Heart right ventricle (tissue), 16 donors: ENCODE measurements at regions of chr1 and their contacts with region 1.

Region 1: DNA sequence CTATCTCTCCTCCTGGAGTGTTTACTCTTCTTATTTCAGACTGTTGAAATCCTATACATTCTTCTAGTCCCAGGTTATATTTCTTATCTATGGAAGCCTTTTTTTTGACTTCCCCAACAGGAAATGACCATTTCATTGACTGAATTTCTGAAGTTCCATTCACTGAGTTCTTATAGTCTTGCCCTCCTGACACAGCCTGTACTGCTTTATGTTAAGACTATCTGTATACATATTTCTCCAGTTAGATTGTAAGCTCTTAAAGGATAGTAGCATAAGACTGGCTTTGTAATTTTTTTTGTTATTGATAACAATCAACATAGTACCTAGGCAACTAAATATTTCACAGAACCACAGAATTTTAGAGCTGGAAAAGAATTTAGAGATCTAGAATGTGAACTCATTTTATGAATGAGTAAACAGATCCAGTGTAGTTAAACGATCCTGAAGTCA is 14.9 kb upstream of the MACF1 start:
- DNase-seq: no peak
- ATAC-seq: no peak
- H3K4me3 ChIP-seq: no peak overlapping the region
- H3K27ac ChIP-seq: no peak overlapping the region
- H3K4me1 ChIP-seq: peaks cover 3 to 67% (median 37%) of the 10 kb centered on the region in 9 donors
- H3K27me3 ChIP-seq: no peaks in the 10 kb centered on the region
- CTCF ChIP-seq: no peak

Region 2: GRCh38 chr1:38708701-38709258 is 480.8 kb before region 1 on chr1:
- intact Hi-C with region 1: no loop called
- DNase-seq: no peak
- ATAC-seq: no peak
- H3K4me3 ChIP-seq: no peak overlapping the region
- H3K27ac ChIP-seq: no peak overlapping the region
- H3K4me1 ChIP-seq: no peaks in the 10 kb centered on the region
- H3K27me3 ChIP-seq: peaks cover 0 to 26% (median 0%) of the 10 kb centered on the region in 7 donors
- CTCF ChIP-seq: no peak

Region 3: DNA sequence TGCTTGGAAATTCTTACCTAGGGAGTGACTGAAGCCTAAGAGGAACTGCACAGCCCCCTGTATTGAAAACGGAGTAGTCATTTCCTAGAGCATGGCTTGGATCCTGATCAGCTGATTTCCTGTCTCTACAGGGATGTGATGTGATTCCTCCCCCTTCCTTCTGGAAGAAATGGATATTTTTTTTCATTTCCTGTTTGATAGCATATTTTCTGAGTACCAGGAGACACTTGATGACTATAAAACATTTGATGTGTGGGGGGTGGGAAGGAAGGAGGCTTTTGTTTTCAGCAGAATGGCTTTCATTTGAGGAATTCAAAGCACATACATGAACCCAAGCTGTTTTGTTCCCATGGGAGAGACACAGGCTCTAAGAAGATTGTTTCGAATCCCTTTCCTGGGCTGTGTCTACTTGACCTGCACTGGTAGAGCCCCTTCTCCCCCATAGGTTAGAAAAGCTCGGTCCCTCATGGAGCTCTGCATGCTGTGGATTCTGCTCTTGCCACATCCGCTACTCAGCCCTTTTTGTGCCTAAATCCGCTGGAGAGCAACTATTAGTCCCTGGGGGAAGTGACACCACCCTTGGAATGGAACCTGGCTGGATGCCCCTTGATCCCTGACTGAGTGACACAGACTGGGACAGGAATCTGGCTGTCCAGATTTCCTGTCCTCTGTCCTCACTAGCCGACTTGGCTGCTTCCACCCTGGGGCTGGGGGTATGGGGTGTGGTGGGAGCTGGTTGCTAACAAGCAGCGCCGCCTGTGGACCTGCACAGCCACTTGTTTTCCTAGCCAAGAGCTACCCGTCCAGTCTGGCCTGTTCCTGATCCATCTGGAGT is 56.9 kb before region 1 on chr1:
- intact Hi-C with region 1: loop called in 3 of 10 experiments (anchors 5 to 10 kb)
- DNase-seq: peak; percentile 74 to 88
- ATAC-seq: peak; percentile 76 to 95 (median 91)
- H3K4me3 ChIP-seq: peak overlapping the region in 2 of 10 donors; percentile 6 to 9
- H3K27ac ChIP-seq: peak overlapping the region in 9 of 10 donors; percentile 69 to 84 (median 75)
- H3K4me1 ChIP-seq: peaks cover 5 to 76% (median 61%) of the 10 kb centered on the region in 9 donors
- H3K27me3 ChIP-seq: no peaks in the 10 kb centered on the region
- CTCF ChIP-seq: peak in 8 of 9 donors; percentile 26 to 69 (median 48)

Region 4: DNA sequence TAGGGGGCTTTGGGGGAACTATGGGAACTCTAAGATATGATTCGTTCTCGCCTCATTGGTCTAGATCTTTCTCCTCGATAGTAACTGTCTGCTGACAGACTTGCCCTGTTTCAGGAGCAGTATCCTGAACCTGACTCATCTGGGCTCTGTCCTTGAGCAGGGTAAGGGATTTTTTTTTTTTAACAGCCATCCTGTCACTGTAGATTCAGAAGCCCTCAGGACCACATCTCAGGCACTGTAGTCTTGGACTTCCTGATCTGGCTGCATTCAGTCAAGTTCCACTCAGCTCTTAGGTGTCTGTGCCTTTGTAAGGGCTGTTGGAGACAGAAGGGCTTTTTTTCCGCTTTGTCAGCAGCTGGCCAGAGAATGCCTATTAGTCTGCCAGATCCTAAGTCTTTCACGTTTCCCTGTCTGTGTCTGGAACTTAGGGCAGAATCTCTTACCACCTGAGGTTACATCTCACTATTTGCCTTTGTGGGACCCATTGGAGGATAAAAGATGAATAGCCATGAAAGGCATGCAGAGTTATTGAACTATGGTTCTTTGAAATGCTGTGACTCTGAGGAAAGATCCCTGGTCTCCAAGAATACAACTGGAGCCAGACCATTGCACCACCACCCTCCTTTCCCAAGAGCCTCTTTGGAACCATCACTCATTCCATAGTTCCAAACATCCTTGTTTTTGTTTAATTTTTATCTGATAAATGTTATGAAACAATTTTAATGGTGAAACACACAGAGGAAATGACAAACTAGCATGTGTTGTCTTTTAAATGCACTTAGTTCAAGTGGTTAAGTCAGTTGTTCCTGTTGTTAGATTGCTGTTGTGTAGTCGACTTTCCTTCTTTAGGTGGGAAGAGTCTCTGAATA is 34.8 kb before region 1 on chr1:
- intact Hi-C with region 1: loop called in 3 of 10 experiments (anchors 5 kb)
- DNase-seq: peak in 1 of 2 donors; percentile 63
- ATAC-seq: peak; percentile 83 to 92 (median 86)
- H3K4me3 ChIP-seq: no peak overlapping the region
- H3K27ac ChIP-seq: peak overlapping the region in 7 of 10 donors; percentile 16 to 58 (median 48)
- H3K4me1 ChIP-seq: peaks cover 16 to 88% (median 74%) of the 10 kb centered on the region in 9 donors
- H3K27me3 ChIP-seq: no peaks in the 10 kb centered on the region
- CTCF ChIP-seq: no peak

Region 5: DNA sequence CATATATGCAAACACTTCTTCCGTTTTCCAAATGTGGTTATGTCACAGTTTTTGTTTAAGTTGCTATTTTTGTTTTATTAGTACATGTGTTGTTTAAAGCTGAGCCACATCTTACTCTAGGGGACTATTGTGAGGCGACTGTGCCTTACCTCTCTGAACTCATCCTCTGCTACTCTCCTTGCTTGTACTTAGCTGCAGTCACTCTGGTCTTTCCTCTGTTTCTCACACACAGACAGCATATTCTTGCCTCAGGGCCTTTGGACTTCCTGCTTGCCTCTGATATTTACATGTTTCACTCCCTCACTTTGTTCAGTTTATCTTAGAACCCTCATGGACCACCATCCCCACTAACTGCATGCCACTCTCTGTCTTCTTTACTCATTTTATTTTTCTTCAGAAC is 115.9 kb after region 1 on chr1:
- intact Hi-C with region 1: no loop called
- DNase-seq: no peak
- ATAC-seq: no peak
- H3K4me3 ChIP-seq: no peak overlapping the region
- H3K27ac ChIP-seq: no peak overlapping the region
- H3K4me1 ChIP-seq: no peaks in the 10 kb centered on the region
- H3K27me3 ChIP-seq: no peaks in the 10 kb centered on the region
- CTCF ChIP-seq: no peak

Region 6: DNA sequence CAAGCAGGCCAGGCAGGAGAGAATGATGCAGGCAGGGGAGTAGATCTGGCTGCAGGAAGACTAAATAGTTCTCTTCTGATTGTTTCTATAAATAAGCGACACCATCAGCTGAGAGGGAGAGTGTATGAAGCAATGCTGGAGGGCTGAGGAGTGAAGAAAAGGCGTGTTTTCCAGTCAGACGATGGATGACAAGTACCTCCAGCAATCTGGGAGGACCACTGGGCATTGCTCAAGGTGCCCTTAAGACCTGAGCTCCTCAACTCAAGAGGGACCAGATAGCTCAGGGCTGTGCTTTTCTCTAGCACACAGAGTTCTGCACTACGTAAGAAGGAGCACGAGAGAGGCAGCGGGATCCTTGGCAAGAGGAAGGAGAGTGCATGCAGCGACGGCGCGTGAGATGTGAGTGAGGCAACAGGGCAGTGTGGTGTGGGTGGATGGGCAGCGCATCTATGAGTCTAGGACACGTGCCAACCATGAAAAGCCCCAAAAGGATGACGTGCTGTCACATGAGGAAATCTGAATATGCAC is 351.0 kb after region 1 on chr1:
- intact Hi-C with region 1: no loop called
- DNase-seq: peak; percentile 65 to 67
- ATAC-seq: peak; percentile 59 to 90 (median 84)
- H3K4me3 ChIP-seq: no peak overlapping the region
- H3K27ac ChIP-seq: peak overlapping the region; percentile 34 to 76 (median 68)
- H3K4me1 ChIP-seq: peaks cover 0 to 30% (median 18%) of the 10 kb centered on the region in 9 donors
- H3K27me3 ChIP-seq: no peaks in the 10 kb centered on the region
- CTCF ChIP-seq: no peak

Region 7: GRCh38 chr1:40032240-40032891 is 842.7 kb after region 1 on chr1:
- intact Hi-C with region 1: no loop called
- DNase-seq: peak in 1 of 2 donors; percentile 41
- ATAC-seq: peak in 2 of 8 donors; percentile 22 to 54
- H3K4me3 ChIP-seq: no peak overlapping the region
- H3K27ac ChIP-seq: no peak overlapping the region
- H3K4me1 ChIP-seq: peaks cover 0 to 43% (median 25%) of the 10 kb centered on the region in 9 donors
- H3K27me3 ChIP-seq: no peaks in the 10 kb centered on the region
- CTCF ChIP-seq: peak; percentile 29 to 83 (median 72)